Activated T-helper 2 cell treated with anti-CD3 and anti-CD28 coated beads, Interferon-gamma antibody, Interleukin-2, Interleukin-4, amounts not matched to agents 10 μg/mL and 5 μg/mL and 100 μg/mL, durations not matched to agents 14 hours and 24 hours and 36 hours (primary cell): ENCODE measurements at regions of chr3 and their contacts with region 1.

Region 1: GRCh38 chr3:140134231-140134965 is 199.4 kb downstream of the CLSTN2 start:
- DNase-seq: no peak
- H3K4me3 Mint-ChIP-seq: no peak overlapping the region
- H3K27ac Mint-ChIP-seq: no peak overlapping the region
- H3K4me1 Mint-ChIP-seq: no peaks in the 10 kb centered on the region
- H3K27me3 Mint-ChIP-seq: no peaks in the 10 kb centered on the region

Region 2: DNA sequence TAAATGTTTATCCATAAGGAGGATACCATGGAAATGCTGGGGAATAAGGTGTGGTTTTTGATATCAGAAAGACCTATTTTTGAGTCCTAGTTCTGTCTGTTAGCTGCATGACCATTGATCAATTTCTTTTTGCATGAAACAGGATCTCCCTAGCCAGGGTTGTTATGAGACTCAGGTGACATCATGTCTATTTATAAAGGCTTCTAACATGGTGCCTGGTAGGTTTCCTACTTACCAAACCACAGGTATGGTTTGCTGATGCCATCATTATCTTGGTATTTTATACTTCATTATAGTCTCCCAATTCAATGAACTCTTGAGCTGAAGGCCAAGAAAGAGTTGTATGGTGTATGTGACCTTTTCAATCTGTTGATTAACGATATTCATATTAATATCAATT is 55.5 kb before region 1 on chr3:
- intact Hi-C with region 1: no loop called
- DNase-seq: no peak
- H3K4me3 Mint-ChIP-seq: no peak overlapping the region
- H3K27ac Mint-ChIP-seq: no peak overlapping the region
- H3K4me1 Mint-ChIP-seq: no peaks in the 10 kb centered on the region
- H3K27me3 Mint-ChIP-seq: no peaks in the 10 kb centered on the region

Region 3: GRCh38 chr3:140186421-140186920 is 52.1 kb after region 1 on chr3:
- intact Hi-C with region 1: no loop called
- DNase-seq: no peak
- H3K4me3 Mint-ChIP-seq: no peak overlapping the region
- H3K27ac Mint-ChIP-seq: no peak overlapping the region
- H3K4me1 Mint-ChIP-seq: no peaks in the 10 kb centered on the region
- H3K27me3 Mint-ChIP-seq: no peaks in the 10 kb centered on the region

Region 4: GRCh38 chr3:140521751-140522445 is 387.5 kb after region 1 on chr3:
- intact Hi-C with region 1: loop called (anchors 5 kb)
- DNase-seq: no peak
- H3K4me3 Mint-ChIP-seq: no peak overlapping the region
- H3K27ac Mint-ChIP-seq: no peak overlapping the region
- H3K4me1 Mint-ChIP-seq: no peaks in the 10 kb centered on the region
- H3K27me3 Mint-ChIP-seq: no peaks in the 10 kb centered on the region